GM12878 (cell line): ENCODE measurements at regions of chr9 and their contacts with region 1.

Region 1: GRCh38 chr9:98118640-98119601 is at the start of gene TRIM14:
- DNase-seq: no peak
- ATAC-seq: peak; percentile 78
- H3K4me3 ChIP-seq: peak within 1 kb of the TSS; percentile 77
- H3K27ac ChIP-seq: peak within 1 kb of the TSS; percentile 90
- H3K4me1 ChIP-seq: peaks cover 25% of the 10 kb centered on the region
- H3K27me3 ChIP-seq: no peaks in the 10 kb centered on the region
- CTCF ChIP-seq: peak in 2 of 3 experiments; percentile 28 to 44; a peak in 3 of 6 replicates
- EP300 ChIP-seq: no peak
- POLR2A ChIP-seq: peak; percentile 94
- RAD21 ChIP-seq: peak; percentile 47
- polyA plus RNA-seq, gene TRIM14: 8.6 to 10.2 TPM

Region 2: DNA sequence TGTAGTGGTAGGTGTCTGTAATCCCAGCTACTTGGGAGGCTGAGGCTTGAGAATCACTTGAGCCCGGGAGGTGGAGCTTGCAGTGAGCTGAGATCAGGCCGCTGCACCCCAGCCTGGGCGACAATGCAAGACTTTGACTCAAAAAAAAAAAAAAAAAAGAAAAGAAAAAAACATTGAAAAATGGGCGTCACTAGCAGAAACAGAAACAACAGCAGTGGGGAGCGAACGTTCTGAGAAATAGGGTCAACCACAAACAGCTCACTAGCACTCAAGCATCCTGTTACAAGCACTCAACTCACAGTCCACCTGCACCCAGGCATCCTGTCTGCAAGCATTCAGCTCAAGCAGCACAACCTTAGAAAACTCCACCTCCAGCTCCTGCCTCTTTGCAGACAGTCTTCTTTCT is 17.1 kb before region 1 on chr9:
- CTCF ChIA-PET with region 1: interaction called, 16 read pairs
- POLR2A ChIA-PET with region 1: interaction called, 17 read pairs
- RAD21 ChIA-PET with region 1: interaction called, 34 read pairs
- SMC1A ChIA-PET with region 1: interaction called, 17 read pairs
- in situ Hi-C with region 1: no loop called
- intact Hi-C with region 1: loop called (anchors 2 kb)
- DNase-seq: peak; percentile 99
- ATAC-seq: peak; percentile 90
- H3K4me3 ChIP-seq: peak overlapping the region; percentile 31; the same call in 1 of the 2 replicates
- H3K27ac ChIP-seq: peak overlapping the region; percentile 75
- H3K4me1 ChIP-seq: peaks cover 87% of the 10 kb centered on the region
- H3K27me3 ChIP-seq: no peaks in the 10 kb centered on the region
- CTCF ChIP-seq: no peak
- EP300 ChIP-seq: peak; percentile 80 to 82
- POLR2A ChIP-seq: peak; percentile 65
- RAD21 ChIP-seq: no peak

Region 3: GRCh38 chr9:98129451-98129881 is 10.5 kb after region 1 on chr9:
- CTCF ChIA-PET with region 1: interaction called, 8 read pairs
- POLR2A ChIA-PET with region 1: no interaction called
- RAD21 ChIA-PET with region 1: interaction called, 12 read pairs
- SMC1A ChIA-PET with region 1: interaction called, 12 read pairs
- in situ Hi-C with region 1: no loop called
- intact Hi-C with region 1: no loop called
- DNase-seq: no peak
- ATAC-seq: peak; percentile 89
- H3K4me3 ChIP-seq: no peak overlapping the region
- H3K27ac ChIP-seq: no peak overlapping the region
- H3K4me1 ChIP-seq: peaks cover 12% of the 10 kb centered on the region
- H3K27me3 ChIP-seq: no peaks in the 10 kb centered on the region
- CTCF ChIP-seq: no peak
- EP300 ChIP-seq: no peak; a peak in 1 of 4 replicates
- POLR2A ChIP-seq: no peak
- RAD21 ChIP-seq: no peak

Region 4: DNA sequence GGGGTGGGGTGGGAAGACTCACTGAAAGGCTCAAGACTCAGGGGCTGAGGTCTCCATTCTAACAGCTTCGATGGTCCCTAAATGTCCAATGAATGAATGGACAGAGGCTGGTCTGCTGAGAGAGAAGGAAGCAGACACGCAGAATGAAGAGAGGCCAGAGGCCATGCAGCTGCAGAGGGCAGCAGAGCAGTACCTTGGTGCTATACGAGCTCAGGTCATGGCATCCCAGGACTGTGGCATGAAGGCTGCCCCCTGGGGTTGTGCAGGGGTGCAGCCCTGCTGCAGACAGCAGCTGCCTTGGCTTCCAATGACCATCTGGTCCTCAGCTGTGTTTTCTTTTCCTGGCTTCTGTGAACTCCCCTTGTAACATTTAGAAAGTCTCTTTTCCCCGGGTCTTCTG is 88.7 kb after region 1 on chr9:
- CTCF ChIA-PET with region 1: interaction called, 13 read pairs
- POLR2A ChIA-PET with region 1: interaction called, 3 read pairs
- RAD21 ChIA-PET with region 1: interaction called, 11 read pairs
- SMC1A ChIA-PET with region 1: interaction called, 7 read pairs
- in situ Hi-C with region 1: no loop called
- intact Hi-C with region 1: loop called (anchors 1 kb)
- DNase-seq: no peak
- ATAC-seq: no peak
- H3K4me3 ChIP-seq: no peak overlapping the region
- H3K27ac ChIP-seq: no peak overlapping the region
- H3K4me1 ChIP-seq: no peaks in the 10 kb centered on the region; the same call in 1 of the 2 replicates
- H3K27me3 ChIP-seq: no peaks in the 10 kb centered on the region; a peak in 1 of 4 replicates
- CTCF ChIP-seq: no peak
- EP300 ChIP-seq: no peak
- POLR2A ChIP-seq: no peak
- RAD21 ChIP-seq: no peak

Region 5: GRCh38 chr9:98263482-98264357 is 144.8 kb after region 1 on chr9:
- CTCF ChIA-PET with region 1: interaction called, 49 read pairs
- POLR2A ChIA-PET with region 1: no interaction called
- RAD21 ChIA-PET with region 1: interaction called, 12 read pairs
- SMC1A ChIA-PET with region 1: interaction called, 5 read pairs
- in situ Hi-C with region 1: no loop called
- intact Hi-C with region 1: loop called (anchors 1 kb)
- DNase-seq: peak; percentile 40
- ATAC-seq: peak; percentile 100
- H3K4me3 ChIP-seq: no peak overlapping the region
- H3K27ac ChIP-seq: no peak overlapping the region
- H3K4me1 ChIP-seq: no peaks in the 10 kb centered on the region
- H3K27me3 ChIP-seq: no peaks in the 10 kb centered on the region
- CTCF ChIP-seq: peak; percentile 91 to 95 (median 93)
- EP300 ChIP-seq: no peak
- POLR2A ChIP-seq: no peak
- RAD21 ChIP-seq: peak; percentile 99

Region 6: DNA sequence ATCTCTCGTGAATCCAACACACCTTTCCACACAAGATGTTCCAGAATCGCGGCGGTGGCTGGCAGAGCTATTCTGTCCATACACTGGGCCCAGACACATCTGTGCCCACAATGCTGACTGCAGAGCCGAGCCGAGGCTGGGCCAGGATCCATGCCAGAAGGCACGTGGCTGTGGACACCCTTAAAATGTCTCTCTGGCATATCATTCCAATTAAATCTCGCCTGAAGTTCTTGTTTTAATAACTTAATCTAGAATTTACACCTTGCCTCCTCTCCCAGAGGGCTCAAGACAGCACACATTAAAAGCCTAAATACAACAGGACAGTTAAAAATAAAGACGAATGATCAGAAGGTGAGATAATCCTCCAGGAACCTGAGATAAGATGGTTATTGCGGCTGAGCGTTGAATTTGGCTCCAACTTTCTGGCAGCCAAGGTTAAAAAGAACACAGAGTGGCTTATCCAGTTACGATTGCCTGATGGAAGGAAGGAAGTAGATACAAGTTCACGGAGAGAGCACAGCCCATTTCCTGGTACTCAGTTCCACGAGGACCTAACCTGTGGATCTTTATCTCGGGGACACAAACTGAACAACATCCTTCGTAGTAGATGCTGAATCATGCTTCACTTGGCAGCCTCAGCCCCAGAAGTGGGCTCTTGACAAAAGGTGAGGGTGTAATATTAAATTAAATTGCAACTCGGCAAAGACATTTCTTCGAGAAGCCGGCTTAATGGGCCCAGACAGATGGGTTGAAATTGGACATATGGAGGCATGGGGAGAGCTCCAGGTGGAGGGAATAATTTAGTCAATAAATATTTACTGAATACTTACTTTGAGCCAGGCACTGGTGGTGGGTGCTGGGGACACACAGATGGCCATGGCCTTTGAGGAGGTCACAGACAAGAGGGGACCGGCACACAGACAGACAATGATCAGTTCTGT is 222.5 kb after region 1 on chr9:
- CTCF ChIA-PET with region 1: no interaction called
- POLR2A ChIA-PET with region 1: no interaction called
- RAD21 ChIA-PET with region 1: no interaction called
- SMC1A ChIA-PET with region 1: no interaction called
- in situ Hi-C with region 1: no loop called
- intact Hi-C with region 1: no loop called
- DNase-seq: no peak
- ATAC-seq: no peak
- H3K4me3 ChIP-seq: no peak overlapping the region
- H3K27ac ChIP-seq: no peak overlapping the region
- H3K4me1 ChIP-seq: no peaks in the 10 kb centered on the region
- H3K27me3 ChIP-seq: peaks cover 3 to 8% of the 10 kb centered on the region in 2 experiments
- CTCF ChIP-seq: no peak
- EP300 ChIP-seq: no peak
- POLR2A ChIP-seq: no peak
- RAD21 ChIP-seq: no peak